PC-9 (cell line): ENCODE measurements at regions of chr7 and their contacts with region 1.

Region 1: DNA sequence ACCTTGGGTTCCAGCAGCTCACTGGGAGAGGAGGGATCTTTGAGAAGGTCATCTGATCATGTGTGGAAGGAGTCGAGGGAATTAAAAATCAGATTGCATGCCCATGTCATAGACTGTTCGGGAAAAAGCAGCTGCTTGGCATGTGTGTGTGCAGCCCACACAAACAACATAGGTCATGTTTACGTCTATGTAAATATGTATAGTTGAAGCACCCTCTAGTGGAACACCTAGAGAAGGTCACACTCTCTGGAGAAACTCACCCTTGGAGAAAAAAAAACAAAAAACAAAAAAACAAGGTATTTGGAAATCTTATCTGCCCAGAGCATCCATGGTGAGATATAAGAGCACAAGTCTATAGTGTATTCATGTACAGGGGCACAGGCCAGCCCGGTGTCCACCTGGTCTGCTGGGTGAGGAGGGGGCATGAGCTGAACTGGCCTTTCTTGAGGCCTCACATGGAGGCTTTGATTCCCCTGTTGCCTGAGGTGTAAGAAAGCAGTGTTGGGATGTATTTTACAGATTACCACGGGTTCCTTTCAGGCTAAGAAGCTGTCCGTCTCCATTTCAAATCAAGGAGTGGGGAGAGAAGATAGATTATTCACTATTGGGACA is 98.0 kb downstream of the NPY start:
- DNase-seq: peak in 1 of 2 experiments; percentile 54
- H3K4me3 ChIP-seq: no peak overlapping the region
- H3K27ac ChIP-seq: no peak overlapping the region
- H3K4me1 ChIP-seq: peaks cover 20% of the 10 kb centered on the region
- H3K27me3 ChIP-seq: no peaks in the 10 kb centered on the region
- CTCF ChIP-seq: peak; percentile 88

Region 2: GRCh38 chr7:23863209-23863798 is 518.7 kb before region 1 on chr7:
- CTCF ChIA-PET with region 1: no interaction called
- POLR2A ChIA-PET with region 1: no interaction called
- intact Hi-C with region 1: loop called (anchors 1 kb)
- DNase-seq: peak in 1 of 2 experiments; percentile 51
- H3K4me3 ChIP-seq: no peak overlapping the region
- H3K27ac ChIP-seq: no peak overlapping the region
- H3K4me1 ChIP-seq: peaks cover 22% of the 10 kb centered on the region
- H3K27me3 ChIP-seq: no peaks in the 10 kb centered on the region
- CTCF ChIP-seq: peak; percentile 98